ENCODE measurements at regions of chr7 and their contacts with region 1.

Region 1: GRCh38 chr7:7848246-7848645 is 120.3 kb upstream of the GLCCI1 start:
- DNase-seq: no peak
- ATAC-seq: no peak
- H3K4me3 ChIP-seq: no peak overlapping the region
- H3K27ac ChIP-seq: no peak overlapping the region
- H3K4me1 ChIP-seq: peaks cover 0 to 12% (median 0%) of the 10 kb centered on the region in 12 donors
- H3K27me3 ChIP-seq: no peaks in the 10 kb centered on the region
- CTCF ChIP-seq: no peak
- POLR2A ChIP-seq: no peak

Region 2: DNA sequence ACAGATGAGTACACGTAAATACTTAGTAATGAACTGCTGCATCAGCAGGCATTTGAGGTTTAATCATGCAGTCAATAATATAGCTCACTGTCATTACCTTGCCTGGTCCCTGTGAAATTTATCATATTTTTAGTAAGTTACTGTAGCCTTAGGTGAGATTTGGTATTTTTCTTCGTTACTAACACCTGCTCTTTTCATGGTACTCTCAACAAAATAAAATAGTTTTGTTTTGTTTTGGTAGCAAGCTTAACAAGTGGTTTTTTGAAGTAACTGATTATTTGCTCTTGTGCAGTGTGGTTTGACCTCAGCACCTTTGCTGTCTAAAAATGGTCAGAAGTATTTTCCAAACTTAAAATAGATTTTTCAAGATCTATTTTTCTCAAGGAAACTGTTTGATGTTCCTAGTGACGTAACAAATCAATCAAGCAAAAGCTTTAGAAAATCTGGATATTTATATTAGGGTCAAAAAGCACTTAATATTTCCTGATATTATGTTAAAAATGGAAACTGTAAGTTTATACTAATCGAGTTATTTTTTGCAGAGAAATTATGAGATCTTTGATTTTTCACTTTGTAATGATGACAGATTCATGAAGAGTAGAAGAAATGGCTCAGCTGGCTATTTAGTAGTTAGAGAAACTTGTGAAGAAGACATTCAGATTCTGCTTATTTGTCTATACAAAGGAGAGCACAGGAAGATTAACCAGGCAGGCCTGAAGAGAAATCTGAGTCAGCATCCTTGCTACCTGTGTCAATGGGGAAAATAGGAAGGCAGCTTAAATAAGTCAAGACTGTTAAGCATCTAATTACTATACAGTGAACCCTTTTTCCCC is 108.8 kb before region 1 on chr7:
- intact Hi-C with region 1: no loop called
- DNase-seq: no peak
- ATAC-seq: no peak
- H3K4me3 ChIP-seq: no peak overlapping the region
- H3K27ac ChIP-seq: no peak overlapping the region
- H3K4me1 ChIP-seq: peaks cover 0 to 18% (median 0%) of the 10 kb centered on the region in 12 donors
- H3K27me3 ChIP-seq: no peaks in the 10 kb centered on the region
- CTCF ChIP-seq: no peak
- POLR2A ChIP-seq: no peak

Region 3: DNA sequence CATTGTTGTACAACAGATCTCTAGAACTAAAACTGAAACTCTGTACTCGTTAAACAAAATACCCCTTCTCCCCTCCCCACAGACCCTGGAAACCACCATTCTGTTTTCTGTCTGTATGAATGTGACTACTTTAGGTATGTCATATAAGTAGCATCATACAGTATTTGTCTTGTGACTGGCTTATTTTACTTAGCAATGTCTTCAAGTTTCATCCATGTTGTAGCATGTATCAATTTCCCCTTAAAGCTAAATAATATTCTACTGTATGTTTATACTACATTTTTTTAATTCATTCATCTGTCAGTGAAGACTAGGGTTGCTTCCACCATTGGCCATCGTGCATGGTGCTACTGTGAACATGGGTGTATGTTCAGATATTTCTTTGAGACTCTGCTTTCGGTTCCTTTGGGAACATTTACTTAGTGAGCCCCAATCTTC is 58.7 kb before region 1 on chr7:
- intact Hi-C with region 1: loop called in 1 of 10 experiments (anchors 10 kb)
- DNase-seq: no peak
- ATAC-seq: no peak
- H3K4me3 ChIP-seq: no peak overlapping the region
- H3K27ac ChIP-seq: no peak overlapping the region
- H3K4me1 ChIP-seq: peaks cover 0 to 8% (median 0%) of the 10 kb centered on the region in 12 donors
- H3K27me3 ChIP-seq: no peaks in the 10 kb centered on the region
- CTCF ChIP-seq: no peak
- POLR2A ChIP-seq: no peak